ENCODE measurements at regions of chr4 and their contacts with region 1.

Region 1: DNA sequence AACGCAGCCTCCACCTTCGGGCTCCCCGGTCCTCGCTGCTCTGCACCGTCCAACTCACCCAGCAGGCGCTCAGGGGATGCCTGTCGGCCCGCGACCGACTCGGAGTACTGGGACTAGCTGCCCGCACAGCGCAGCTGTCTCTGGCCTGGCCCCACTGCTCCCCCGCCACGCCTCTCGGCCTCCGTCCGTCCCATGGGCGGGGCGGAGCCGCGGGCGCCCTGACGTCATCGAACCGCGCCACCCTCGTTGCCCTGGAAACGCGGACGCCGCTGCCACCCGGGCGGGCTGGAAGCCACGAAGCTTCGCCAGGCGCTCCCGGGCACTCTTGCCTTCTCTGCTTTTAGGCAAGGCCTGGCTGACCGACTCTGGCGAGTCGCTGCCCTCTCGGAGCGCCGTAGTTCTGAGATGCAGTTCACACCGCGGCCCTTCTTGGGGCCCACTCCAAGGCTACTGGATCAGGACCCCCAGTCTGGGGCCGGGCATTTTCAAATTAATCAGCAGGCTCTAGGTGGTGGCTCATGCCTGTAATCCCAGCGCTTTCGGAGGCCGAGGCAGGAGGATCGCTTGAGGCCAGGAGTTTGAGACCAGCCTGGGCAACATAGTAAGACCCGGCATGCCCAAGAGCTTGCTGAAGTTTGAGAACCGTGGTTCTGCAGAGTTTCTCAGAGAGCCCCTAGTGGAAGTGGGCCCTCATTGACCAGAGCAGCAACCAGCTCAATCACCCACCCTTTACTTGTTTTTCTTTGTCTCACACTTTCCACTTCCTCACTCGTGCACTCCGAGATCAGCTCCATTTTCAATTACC is 12.0 kb downstream of the ACOX3 start:
- DNase-seq: peak; percentile 84 to 99 (median 91)
- ATAC-seq: peak; percentile 92 to 96
- H3K4me3 Mint-ChIP-seq: peak overlapping the region; percentile 90 to 98 (median 94)
- H3K27ac Mint-ChIP-seq: peak overlapping the region; percentile 81 to 98 (median 94)
- H3K4me1 Mint-ChIP-seq: peaks cover 22 to 49% (median 43%) of the 10 kb centered on the region in 4 donors
- H3K27me3 Mint-ChIP-seq: no peaks in the 10 kb centered on the region

Region 2: GRCh38 chr4:7890635-7891393 is 537.7 kb before region 1 on chr4:
- POLR2A ChIA-PET with region 1: no interaction called
- DNase-seq: no peak
- ATAC-seq: no peak
- H3K4me3 Mint-ChIP-seq: no peak overlapping the region
- H3K27ac Mint-ChIP-seq: peak overlapping the region in 2 of 10 donors; percentile 37 to 72
- H3K4me1 Mint-ChIP-seq: peaks cover 0 to 30% (median 13%) of the 10 kb centered on the region in 4 donors
- H3K27me3 Mint-ChIP-seq: peaks cover 0 to 2% (median 0%) of the 10 kb centered on the region in 5 donors

Region 3: GRCh38 chr4:8414377-8414776 is 14.1 kb before region 1 on chr4:
- POLR2A ChIA-PET with region 1: no interaction called
- DNase-seq: no peak
- ATAC-seq: no peak
- H3K4me3 Mint-ChIP-seq: no peak overlapping the region
- H3K27ac Mint-ChIP-seq: no peak overlapping the region
- H3K4me1 Mint-ChIP-seq: peaks cover 16 to 23% (median 19%) of the 10 kb centered on the region in 4 donors
- H3K27me3 Mint-ChIP-seq: no peaks in the 10 kb centered on the region

Region 4: DNA sequence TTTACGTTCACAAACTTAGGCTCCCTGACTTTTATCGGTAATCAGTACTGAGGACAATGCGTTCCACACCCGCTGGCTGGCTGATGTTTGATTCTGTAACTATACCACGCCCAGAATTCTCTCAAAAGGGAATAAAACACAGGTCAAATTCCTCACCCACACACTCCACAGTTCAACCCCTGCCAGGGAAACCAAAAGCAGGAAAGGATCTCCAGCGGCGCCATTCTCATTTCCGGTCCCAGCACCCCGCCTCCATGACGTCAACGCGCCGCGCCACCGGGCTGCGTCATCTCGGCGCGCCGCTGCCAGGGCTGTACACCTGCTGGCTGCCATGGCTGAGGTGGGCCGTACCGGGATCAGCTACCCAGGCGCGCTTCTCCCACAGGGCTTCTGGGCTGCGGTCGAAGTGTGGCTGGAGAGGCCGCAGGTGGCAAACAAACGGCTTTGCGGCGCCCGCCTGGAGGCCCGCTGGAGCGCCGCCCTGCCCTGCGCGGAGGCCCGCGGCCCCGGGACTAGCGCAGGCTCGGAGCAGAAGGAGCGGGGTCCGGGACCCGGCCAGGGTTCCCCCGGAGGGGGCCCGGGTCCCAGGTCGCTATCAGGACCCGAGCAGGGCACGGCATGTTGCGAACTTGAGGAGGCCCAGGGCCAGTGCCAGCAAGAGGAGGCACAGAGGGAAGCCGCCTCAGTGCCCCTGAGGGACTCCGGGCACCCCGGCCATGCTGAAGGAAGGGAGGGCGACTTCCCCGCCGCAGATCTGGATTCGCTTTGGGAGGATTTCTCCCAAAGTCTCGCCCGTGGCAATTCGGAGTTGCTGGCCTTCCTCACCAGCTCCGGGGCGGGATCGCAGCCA is 12.2 kb after region 1 on chr4 and contains the starts of genes ACOX3 and TRMT44:
- POLR2A ChIA-PET with region 1: interaction called, 30 read pairs
- DNase-seq: peak; percentile 90 to 99 (median 96)
- ATAC-seq: peak; percentile 91 to 93
- H3K4me3 Mint-ChIP-seq: peak within 1 kb of the TSS; percentile 94 to 100 (median 98)
- H3K27ac Mint-ChIP-seq: peak within 1 kb of the TSS; percentile 98 to 100 (median 99)
- H3K4me1 Mint-ChIP-seq: peaks cover 40 to 89% (median 86%) of the 10 kb centered on the region in 4 donors
- H3K27me3 Mint-ChIP-seq: no peaks in the 10 kb centered on the region
- polyA plus RNA-seq, gene ACOX3: 9.5 to 14.3 (median 11.4) TPM
- polyA plus RNA-seq, gene TRMT44: 11.3 to 15.4 (median 13.0) TPM

Measured in naive thymus-derived CD8-positive, alpha-beta T cell (primary cell).